AG04450 (cell line): ENCODE measurements at regions of chr10 and their contacts with region 1.

Region 1: GRCh38 chr10:72834183-72834825 is 59.2 kb upstream of the OIT3 start:
- DNase-seq: peak; percentile 60
- H3K4me3 ChIP-seq: no peak overlapping the region
- H3K27ac ChIP-seq: no peak overlapping the region
- H3K27me3 ChIP-seq: no peaks in the 10 kb centered on the region
- CTCF ChIP-seq: peak; percentile 72

Region 2: DNA sequence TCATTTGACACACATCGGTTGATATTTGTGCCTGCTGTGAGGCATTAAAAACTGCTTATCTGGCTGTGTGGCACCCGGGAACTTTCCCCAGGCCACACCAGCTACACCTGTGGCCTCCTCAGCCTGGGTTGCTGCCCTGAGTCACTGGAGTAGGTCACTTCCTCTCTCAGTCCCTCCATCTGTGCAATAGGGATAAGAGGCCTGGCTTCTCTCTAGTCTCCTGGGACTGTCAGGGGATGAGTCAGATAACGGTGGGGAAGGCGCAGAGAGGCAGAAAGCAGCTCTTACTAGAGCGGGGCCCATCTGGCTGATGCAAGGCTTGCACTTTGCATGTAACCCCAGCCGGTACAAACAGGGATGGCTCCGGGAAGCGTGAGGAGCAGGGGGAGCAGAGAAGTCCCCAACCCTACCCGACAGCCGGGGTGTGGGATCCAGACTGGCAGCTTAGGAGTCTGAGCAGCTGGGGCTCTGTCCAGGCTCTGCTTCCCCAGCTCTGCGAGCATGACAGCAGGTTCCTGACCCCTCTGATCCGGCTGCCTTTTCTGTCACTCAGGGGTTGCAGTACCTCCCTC is 513.5 kb before region 1 on chr10:
- CTCF ChIA-PET with region 1: no interaction called
- POLR2A ChIA-PET with region 1: no interaction called
- DNase-seq: peak; percentile 95
- H3K4me3 ChIP-seq: peak overlapping the region; percentile 17; the same call in 1 of the 2 replicates
- H3K27ac ChIP-seq: peak overlapping the region; percentile 100
- H3K27me3 ChIP-seq: no peaks in the 10 kb centered on the region
- CTCF ChIP-seq: no peak

Region 3: DNA sequence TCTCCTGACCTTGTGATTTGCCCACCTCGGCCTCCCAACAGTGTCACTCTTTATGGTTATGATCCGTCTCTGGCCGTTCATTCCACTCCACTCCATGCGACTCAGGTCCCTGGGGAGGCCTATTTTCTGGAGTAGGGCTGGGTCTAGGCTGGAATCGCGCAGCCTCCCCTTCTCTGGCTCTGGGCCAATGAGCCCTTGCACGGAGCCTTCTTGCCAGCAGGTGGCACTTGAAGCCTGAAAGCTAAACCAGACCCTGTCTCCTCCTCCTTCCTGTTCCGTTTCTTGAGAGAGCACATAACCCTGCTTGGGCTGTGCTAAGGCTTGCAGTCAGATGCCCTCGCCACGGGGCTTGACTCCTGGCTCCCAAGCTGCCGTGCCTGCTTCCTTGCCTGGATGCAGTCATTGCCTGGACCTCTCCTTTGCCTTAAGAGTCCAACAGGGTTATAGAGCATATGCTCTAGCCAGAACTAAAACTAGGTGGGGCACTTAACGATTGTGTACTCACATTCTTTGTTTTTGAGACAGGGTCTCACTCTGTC is 470.0 kb before region 1 on chr10:
- CTCF ChIA-PET with region 1: interaction called, 38 read pairs
- POLR2A ChIA-PET with region 1: no interaction called
- DNase-seq: peak; percentile 88
- H3K4me3 ChIP-seq: no peak overlapping the region; the same call in 1 of the 2 replicates
- H3K27ac ChIP-seq: peak overlapping the region; percentile 95
- H3K27me3 ChIP-seq: no peaks in the 10 kb centered on the region
- CTCF ChIP-seq: peak; percentile 97

Region 4: DNA sequence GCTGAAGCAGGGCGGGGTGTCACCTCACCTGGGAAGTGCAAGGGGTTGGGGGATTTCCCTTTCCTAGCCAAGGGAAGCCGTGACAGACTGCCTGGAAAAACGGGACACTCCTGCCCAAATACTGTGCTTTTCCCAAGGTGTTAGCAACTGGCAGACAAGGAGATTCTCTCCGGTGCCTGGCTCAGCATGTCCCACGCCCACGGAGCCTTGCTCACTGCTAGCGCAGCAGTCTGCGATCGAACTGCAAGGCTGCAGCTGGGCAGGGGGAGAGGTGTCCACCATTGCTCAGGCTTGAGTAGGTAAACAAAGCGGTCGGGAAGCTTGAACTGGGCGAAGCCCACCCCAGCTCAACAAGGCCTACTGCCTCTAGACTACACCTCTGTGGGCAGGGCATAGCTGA is 398.7 kb before region 1 on chr10:
- CTCF ChIA-PET with region 1: no interaction called
- POLR2A ChIA-PET with region 1: no interaction called
- DNase-seq: no peak
- H3K4me3 ChIP-seq: no peak overlapping the region
- H3K27ac ChIP-seq: no peak overlapping the region
- H3K27me3 ChIP-seq: no peaks in the 10 kb centered on the region
- CTCF ChIP-seq: no peak

Region 5: GRCh38 chr10:72625608-72626443 is 208.5 kb before region 1 on chr10 and contains the start of gene MICU1:
- CTCF ChIA-PET with region 1: interaction called, 19 read pairs
- POLR2A ChIA-PET with region 1: no interaction called
- DNase-seq: peak; percentile 78
- H3K4me3 ChIP-seq: peak within 1 kb of the TSS; percentile 96
- H3K27ac ChIP-seq: peak within 1 kb of the TSS; percentile 88
- H3K27me3 ChIP-seq: no peaks in the 10 kb centered on the region
- CTCF ChIP-seq: no peak
- polyA plus RNA-seq, gene MICU1: 57.7 and 61.7 TPM in 2 replicates

Region 6: GRCh38 chr10:73003822-73004221 is 169.5 kb after region 1 on chr10:
- CTCF ChIA-PET with region 1: no interaction called
- POLR2A ChIA-PET with region 1: no interaction called
- DNase-seq: no peak
- H3K4me3 ChIP-seq: no peak overlapping the region
- H3K27ac ChIP-seq: no peak overlapping the region
- H3K27me3 ChIP-seq: no peaks in the 10 kb centered on the region
- CTCF ChIP-seq: no peak